ENCODE measurements at regions of chr22 and their contacts with region 1.

Region 1: GRCh38 chr22:37498289-37498909 is 12.2 kb upstream of the MFNG start:
- DNase-seq: peak; percentile 50
- ATAC-seq: peak; percentile 14; the same call in 2 of the 3 replicates
- H3K4me3 ChIP-seq: no peak overlapping the region
- H3K27ac ChIP-seq: no peak overlapping the region
- H3K4me1 ChIP-seq: peaks cover 45% of the 10 kb centered on the region
- H3K27me3 ChIP-seq: no peaks in the 10 kb centered on the region
- CTCF ChIP-seq: peak; percentile 97
- EP300 ChIP-seq: no peak
- POLR2A ChIP-seq: no peak
- RAD21 ChIP-seq: peak; percentile 90

Region 2: GRCh38 chr22:37472418-37473006 is 25.9 kb before region 1 on chr22:
- CTCF ChIA-PET with region 1: interaction called, 18 read pairs
- POLR2A ChIA-PET with region 1: interaction called, 4 read pairs
- in situ Hi-C with region 1: no loop called
- intact Hi-C with region 1: no loop called
- DNase-seq: peak; percentile 46
- ATAC-seq: peak; percentile 68
- H3K4me3 ChIP-seq: no peak overlapping the region
- H3K27ac ChIP-seq: no peak overlapping the region
- H3K4me1 ChIP-seq: peaks cover 19% of the 10 kb centered on the region
- H3K27me3 ChIP-seq: peaks cover 0 to 7% of the 10 kb centered on the region in 2 experiments; a peak in 2 of 5 replicates
- CTCF ChIP-seq: peak; percentile 88
- EP300 ChIP-seq: no peak
- POLR2A ChIP-seq: no peak
- RAD21 ChIP-seq: peak; percentile 76

Region 3: DNA sequence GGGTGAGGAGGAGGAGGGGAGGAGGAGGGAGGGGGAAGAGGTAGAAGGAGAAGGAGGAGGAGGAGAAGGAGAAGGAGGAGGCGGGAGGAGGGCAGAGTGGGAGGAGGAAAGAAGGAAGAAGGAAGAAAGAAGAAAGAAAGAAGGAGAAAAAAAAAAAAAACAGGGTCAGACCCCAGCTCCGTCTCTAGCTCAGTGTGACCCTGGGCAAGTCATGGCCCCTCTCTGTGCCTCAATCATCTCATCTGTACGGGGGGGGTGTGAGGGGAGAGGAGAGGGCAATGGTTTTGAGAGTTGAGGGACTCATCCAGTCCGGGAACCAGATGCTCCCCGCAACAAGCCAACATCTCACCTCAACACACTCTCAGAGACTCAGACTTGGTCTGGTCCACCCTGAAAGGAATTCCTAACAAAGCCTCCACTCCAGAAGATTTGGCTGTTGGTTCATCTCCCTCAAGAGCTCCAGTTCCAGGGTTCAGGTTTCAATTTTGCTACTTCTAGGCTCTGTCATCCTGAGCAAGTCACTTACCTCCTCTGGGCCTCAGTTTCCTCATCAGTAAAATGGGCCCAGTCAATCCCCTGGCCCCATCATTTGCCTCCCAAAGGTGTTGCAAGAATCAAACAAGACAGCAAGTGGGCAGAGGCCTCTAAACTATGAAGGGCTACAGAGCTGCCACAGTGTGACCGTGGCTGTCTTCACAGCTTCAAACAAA is 13.2 kb after region 1 on chr22:
- CTCF ChIA-PET with region 1: no interaction called
- POLR2A ChIA-PET with region 1: interaction called, 51 read pairs
- in situ Hi-C with region 1: no loop called
- intact Hi-C with region 1: loop called (anchors 1 kb)
- DNase-seq: no peak
- ATAC-seq: no peak
- H3K4me3 ChIP-seq: peak overlapping the region in 1 of 3 experiments; percentile 47; a peak in 1 of 6 replicates
- H3K27ac ChIP-seq: peak overlapping the region; percentile 98
- H3K4me1 ChIP-seq: peaks cover 82% of the 10 kb centered on the region
- H3K27me3 ChIP-seq: no peaks in the 10 kb centered on the region
- CTCF ChIP-seq: no peak
- EP300 ChIP-seq: no peak
- POLR2A ChIP-seq: no peak
- RAD21 ChIP-seq: no peak

Region 4: GRCh38 chr22:37519268-37520195 is 21.1 kb after region 1 on chr22 and contains the start of gene CARD10:
- CTCF ChIA-PET with region 1: no interaction called
- POLR2A ChIA-PET with region 1: interaction called, 14 read pairs
- in situ Hi-C with region 1: no loop called
- intact Hi-C with region 1: no loop called
- DNase-seq: no peak
- ATAC-seq: peak; percentile 37
- H3K4me3 ChIP-seq: peak within 1 kb of the TSS; percentile 76 to 89 (median 85)
- H3K27ac ChIP-seq: peak within 1 kb of the TSS; percentile 71
- H3K4me1 ChIP-seq: peaks cover 86% of the 10 kb centered on the region
- H3K27me3 ChIP-seq: no peaks in the 10 kb centered on the region; a peak in 1 of 5 replicates
- CTCF ChIP-seq: no peak
- EP300 ChIP-seq: no peak
- POLR2A ChIP-seq: no peak
- RAD21 ChIP-seq: no peak
- total RNA-seq, gene CARD10: 28.9 and 35.2 TPM in 2 replicates

Region 5: GRCh38 chr22:37643225-37643847 is 144.9 kb after region 1 on chr22:
- CTCF ChIA-PET with region 1: no interaction called
- POLR2A ChIA-PET with region 1: no interaction called
- in situ Hi-C with region 1: no loop called
- intact Hi-C with region 1: no loop called
- DNase-seq: no peak
- ATAC-seq: peak; percentile 61
- H3K4me3 ChIP-seq: no peak overlapping the region; a peak in 1 of 6 replicates
- H3K27ac ChIP-seq: no peak overlapping the region
- H3K4me1 ChIP-seq: peaks cover 40% of the 10 kb centered on the region
- H3K27me3 ChIP-seq: no peaks in the 10 kb centered on the region
- CTCF ChIP-seq: peak; percentile 92
- EP300 ChIP-seq: no peak
- POLR2A ChIP-seq: no peak
- RAD21 ChIP-seq: peak; percentile 90